Activated CD8-positive, alpha-beta T cell treated with anti-CD3 and anti-CD28 coated beads for 36 hours (primary cell): ENCODE measurements at regions of chr13 and their contacts with region 1.

Region 1: DNA sequence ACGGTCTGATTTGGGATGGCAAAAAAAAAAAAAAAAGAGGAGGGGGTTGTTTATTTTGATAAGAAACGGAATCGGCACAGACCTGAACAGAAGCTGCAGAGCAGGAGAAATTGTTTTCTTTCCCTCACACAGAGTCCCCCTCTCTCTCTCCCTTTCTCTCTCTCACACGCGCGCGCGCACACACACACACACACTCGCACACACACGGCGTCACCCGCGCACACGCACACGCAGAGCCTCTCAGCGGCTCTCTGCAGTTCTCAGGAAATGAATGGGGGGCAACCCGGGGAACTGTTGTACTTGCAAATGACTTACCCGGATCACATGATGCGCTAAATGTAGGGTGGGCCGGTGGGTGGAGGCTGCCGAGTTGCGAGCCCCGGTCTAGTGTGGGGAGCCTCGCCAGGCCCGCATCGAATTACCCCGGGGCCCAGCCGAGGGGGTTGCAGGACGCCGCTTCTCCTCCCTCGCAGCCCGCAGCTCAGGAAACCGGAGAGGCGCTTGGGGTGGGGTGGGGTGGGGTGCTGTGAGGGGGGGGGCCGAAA is 475 bp downstream of the KLF12 start:
- DNase-seq: peak; percentile 96
- ATAC-seq: peak; percentile 64
- H3K4me3 Mint-ChIP-seq: peak overlapping the region; percentile 91
- H3K27ac Mint-ChIP-seq: peak overlapping the region; percentile 99
- H3K4me1 Mint-ChIP-seq: peaks cover 31% of the 10 kb centered on the region
- H3K27me3 Mint-ChIP-seq: no peaks in the 10 kb centered on the region
- CTCF ChIP-seq: no peak

Region 2: GRCh38 chr13:73835138-73835721 is 298.5 kb before region 1 on chr13:
- CTCF ChIA-PET with region 1: no interaction called
- POLR2A ChIA-PET with region 1: no interaction called
- intact Hi-C with region 1: loop called (anchors 2 kb)
- DNase-seq: no peak
- ATAC-seq: peak; percentile 64
- H3K4me3 Mint-ChIP-seq: no peak overlapping the region
- H3K27ac Mint-ChIP-seq: no peak overlapping the region
- H3K4me1 Mint-ChIP-seq: peaks cover 38% of the 10 kb centered on the region
- H3K27me3 Mint-ChIP-seq: no peaks in the 10 kb centered on the region
- CTCF ChIP-seq: peak; percentile 87

Region 3: GRCh38 chr13:73984949-73985691 is 148.6 kb before region 1 on chr13:
- CTCF ChIA-PET with region 1: interaction called, 5 read pairs
- POLR2A ChIA-PET with region 1: interaction called, 12 read pairs
- intact Hi-C with region 1: no loop called
- DNase-seq: peak; percentile 89
- ATAC-seq: peak; percentile 88
- H3K4me3 Mint-ChIP-seq: peak overlapping the region; percentile 60
- H3K27ac Mint-ChIP-seq: peak overlapping the region; percentile 90
- H3K4me1 Mint-ChIP-seq: peaks cover 56% of the 10 kb centered on the region
- H3K27me3 Mint-ChIP-seq: no peaks in the 10 kb centered on the region
- CTCF ChIP-seq: no peak

Region 4: DNA sequence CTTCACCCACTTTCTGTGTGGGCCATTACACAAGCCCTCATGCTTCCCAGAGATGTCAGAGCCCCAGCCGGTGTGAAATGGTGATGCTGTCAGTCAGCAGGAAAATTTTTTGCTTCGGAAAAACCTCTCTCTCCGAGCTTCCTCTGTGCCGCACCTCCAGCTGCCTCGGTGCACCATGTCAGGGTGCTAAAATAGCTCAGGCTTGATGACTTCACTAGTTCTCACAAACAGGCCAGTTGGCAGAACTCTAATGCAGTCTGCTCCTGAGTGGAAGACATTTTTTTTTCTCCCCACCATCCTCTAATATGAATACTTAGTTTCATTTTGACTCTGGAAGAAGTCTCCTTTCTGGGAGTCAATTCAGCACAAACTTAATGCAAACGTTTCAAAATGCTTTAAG is 70.8 kb before region 1 on chr13:
- CTCF ChIA-PET with region 1: interaction called, 3 read pairs
- POLR2A ChIA-PET with region 1: interaction called, 4 read pairs
- intact Hi-C with region 1: loop called (anchors 5 kb)
- DNase-seq: peak; percentile 40
- ATAC-seq: peak; percentile 52
- H3K4me3 Mint-ChIP-seq: peak overlapping the region; percentile 56
- H3K27ac Mint-ChIP-seq: peak overlapping the region; percentile 80
- H3K4me1 Mint-ChIP-seq: peaks cover 83% of the 10 kb centered on the region
- H3K27me3 Mint-ChIP-seq: no peaks in the 10 kb centered on the region
- CTCF ChIP-seq: no peak

Region 5: GRCh38 chr13:74230984-74231501 is 97.3 kb after region 1 on chr13:
- CTCF ChIA-PET with region 1: no interaction called
- POLR2A ChIA-PET with region 1: no interaction called
- intact Hi-C with region 1: loop called (anchors 5 kb)
- DNase-seq: peak; percentile 28
- ATAC-seq: peak; percentile 91
- H3K4me3 Mint-ChIP-seq: peak overlapping the region; percentile 75
- H3K27ac Mint-ChIP-seq: peak overlapping the region; percentile 91
- H3K4me1 Mint-ChIP-seq: peaks cover 45% of the 10 kb centered on the region
- H3K27me3 Mint-ChIP-seq: no peaks in the 10 kb centered on the region
- CTCF ChIP-seq: no peak

Region 6: DNA sequence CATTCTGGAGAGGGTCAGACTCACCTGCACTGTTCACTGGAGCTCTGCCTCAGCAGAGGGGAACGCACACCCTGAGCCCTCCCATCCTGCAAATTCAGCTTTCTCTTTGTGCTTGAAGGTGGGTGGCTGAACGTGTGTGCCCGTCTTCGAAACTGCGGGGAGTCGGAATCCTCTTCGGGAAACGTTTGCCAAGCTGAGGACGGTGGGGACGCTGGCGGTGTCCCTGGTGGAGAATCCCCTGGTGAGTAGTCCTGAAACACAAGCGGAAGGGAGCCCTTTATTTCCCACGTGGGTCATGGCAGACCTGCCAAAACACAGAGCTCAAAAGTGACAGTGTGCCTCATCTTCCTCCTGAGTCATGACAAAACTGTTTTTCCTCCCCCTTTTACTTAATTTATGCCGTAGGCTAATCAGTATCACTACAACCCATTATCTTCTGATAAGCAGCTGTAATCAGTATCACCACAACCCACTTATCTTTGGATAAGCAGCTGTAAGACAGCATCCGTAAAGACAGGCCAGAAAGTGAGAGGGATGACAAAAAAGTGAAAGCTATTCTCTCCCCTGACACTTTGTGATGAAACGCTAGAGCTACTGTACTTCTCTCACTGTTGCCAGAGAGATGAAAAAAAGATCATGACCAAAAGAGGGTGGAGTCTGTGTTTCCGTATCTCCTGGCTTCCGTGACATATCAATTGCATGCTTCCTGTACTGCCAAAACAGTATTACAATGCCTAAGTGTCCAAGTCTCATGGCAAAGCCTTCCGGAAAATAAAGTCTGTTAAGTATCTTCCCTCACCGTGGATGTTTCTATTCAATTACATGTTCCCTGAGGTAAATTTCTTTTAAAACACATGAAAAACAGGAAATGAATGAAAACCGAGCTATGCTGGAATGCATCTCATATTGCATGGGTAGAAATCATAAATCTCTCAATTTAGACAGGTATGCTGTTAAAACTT is 1192.7 kb after region 1 on chr13:
- CTCF ChIA-PET with region 1: no interaction called
- POLR2A ChIA-PET with region 1: no interaction called
- intact Hi-C with region 1: loop called (anchors 10 kb)
- DNase-seq: peak; percentile 77
- ATAC-seq: peak; percentile 88
- H3K4me3 Mint-ChIP-seq: peak overlapping the region; percentile 98
- H3K27ac Mint-ChIP-seq: peak overlapping the region; percentile 99
- H3K4me1 Mint-ChIP-seq: peaks cover 33% of the 10 kb centered on the region
- H3K27me3 Mint-ChIP-seq: no peaks in the 10 kb centered on the region
- CTCF ChIP-seq: no peak